Transverse colon (tissue), 4 donors: ENCODE measurements at regions of chr16 and their contacts with region 1.

Region 1: GRCh38 chr16:18969050-18969854 is 14.5 kb upstream of the TMC7 start:
- DNase-seq: peak; percentile 88
- H3K4me3 ChIP-seq: peak overlapping the region in 2 of 4 donors; percentile 10 to 37
- H3K27ac ChIP-seq: no peak overlapping the region
- H3K4me1 ChIP-seq: peaks cover 0 to 5% (median 1%) of the 10 kb centered on the region in 4 donors
- H3K27me3 ChIP-seq: no peaks in the 10 kb centered on the region
- CTCF ChIP-seq: peak; percentile 85 to 96 (median 95)
- EP300 ChIP-seq: no peak
- POLR2A ChIP-seq: no peak

Region 2: GRCh38 chr16:18801197-18801972 is 167.9 kb before region 1 on chr16 and contains the start of gene ARL6IP1:
- in situ Hi-C with region 1: loop called in 1 of 4 experiments (anchors 25 kb)
- intact Hi-C with region 1: no loop called
- DNase-seq: peak; percentile 99
- H3K4me3 ChIP-seq: peak within 1 kb of the TSS; percentile 80 to 94 (median 88)
- H3K27ac ChIP-seq: peak within 1 kb of the TSS; percentile 94 to 97 (median 96)
- H3K4me1 ChIP-seq: peaks cover 8 to 33% (median 24%) of the 10 kb centered on the region in 4 donors
- H3K27me3 ChIP-seq: no peaks in the 10 kb centered on the region
- CTCF ChIP-seq: peak; percentile 82 to 98 (median 92)
- EP300 ChIP-seq: no peak
- POLR2A ChIP-seq: peak; percentile 100
- total RNA-seq, gene ARL6IP1: 73.0 to 232 (median 175) TPM

Region 3: GRCh38 chr16:18839555-18839954 is 129.7 kb before region 1 on chr16:
- in situ Hi-C with region 1: loop called in 1 of 4 experiments (anchors 25 kb)
- intact Hi-C with region 1: no loop called
- DNase-seq: peak; percentile 41
- H3K4me3 ChIP-seq: no peak overlapping the region
- H3K27ac ChIP-seq: no peak overlapping the region
- H3K4me1 ChIP-seq: peaks cover 0 to 13% (median 0%) of the 10 kb centered on the region in 4 donors
- H3K27me3 ChIP-seq: no peaks in the 10 kb centered on the region
- CTCF ChIP-seq: no peak
- EP300 ChIP-seq: no peak
- POLR2A ChIP-seq: no peak

Region 4: DNA sequence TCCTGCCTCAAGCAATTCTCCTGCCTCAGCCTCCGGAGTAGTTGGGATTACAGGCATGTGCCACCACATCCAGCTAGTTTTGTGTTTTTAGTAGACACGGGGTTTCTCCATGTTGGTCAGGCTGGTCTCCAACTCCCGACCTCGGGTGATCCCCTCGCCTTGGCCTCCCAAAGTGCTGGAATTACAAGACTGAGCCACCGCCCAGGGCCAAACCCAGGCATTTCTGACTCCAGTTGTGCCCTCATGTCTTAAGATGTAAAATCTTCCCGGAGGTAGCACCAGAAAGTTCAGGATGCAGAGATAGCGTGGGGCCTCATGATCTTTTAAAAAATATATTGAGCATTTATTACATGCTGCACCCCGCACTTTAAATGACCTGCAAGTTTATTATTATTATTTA is 30.3 kb before region 1 on chr16:
- in situ Hi-C with region 1: no loop called
- intact Hi-C with region 1: loop called (anchors 1 kb)
- DNase-seq: no peak
- H3K4me3 ChIP-seq: no peak overlapping the region
- H3K27ac ChIP-seq: no peak overlapping the region
- H3K4me1 ChIP-seq: peaks cover 0 to 31% (median 15%) of the 10 kb centered on the region in 4 donors
- H3K27me3 ChIP-seq: no peaks in the 10 kb centered on the region
- CTCF ChIP-seq: no peak
- EP300 ChIP-seq: no peak
- POLR2A ChIP-seq: no peak

Region 5: GRCh38 chr16:18945233-18945632 is 24.0 kb before region 1 on chr16:
- in situ Hi-C with region 1: no loop called
- intact Hi-C with region 1: loop called (anchors 1 kb)
- DNase-seq: no peak
- H3K4me3 ChIP-seq: no peak overlapping the region
- H3K27ac ChIP-seq: peak overlapping the region in 3 of 4 donors; percentile 56 to 78 (median 73)
- H3K4me1 ChIP-seq: peaks cover 0 to 23% (median 6%) of the 10 kb centered on the region in 4 donors
- H3K27me3 ChIP-seq: no peaks in the 10 kb centered on the region
- CTCF ChIP-seq: no peak
- EP300 ChIP-seq: no peak
- POLR2A ChIP-seq: no peak